ENCODE measurements at regions of chr22 and their contacts with region 1.

Region 1: DNA sequence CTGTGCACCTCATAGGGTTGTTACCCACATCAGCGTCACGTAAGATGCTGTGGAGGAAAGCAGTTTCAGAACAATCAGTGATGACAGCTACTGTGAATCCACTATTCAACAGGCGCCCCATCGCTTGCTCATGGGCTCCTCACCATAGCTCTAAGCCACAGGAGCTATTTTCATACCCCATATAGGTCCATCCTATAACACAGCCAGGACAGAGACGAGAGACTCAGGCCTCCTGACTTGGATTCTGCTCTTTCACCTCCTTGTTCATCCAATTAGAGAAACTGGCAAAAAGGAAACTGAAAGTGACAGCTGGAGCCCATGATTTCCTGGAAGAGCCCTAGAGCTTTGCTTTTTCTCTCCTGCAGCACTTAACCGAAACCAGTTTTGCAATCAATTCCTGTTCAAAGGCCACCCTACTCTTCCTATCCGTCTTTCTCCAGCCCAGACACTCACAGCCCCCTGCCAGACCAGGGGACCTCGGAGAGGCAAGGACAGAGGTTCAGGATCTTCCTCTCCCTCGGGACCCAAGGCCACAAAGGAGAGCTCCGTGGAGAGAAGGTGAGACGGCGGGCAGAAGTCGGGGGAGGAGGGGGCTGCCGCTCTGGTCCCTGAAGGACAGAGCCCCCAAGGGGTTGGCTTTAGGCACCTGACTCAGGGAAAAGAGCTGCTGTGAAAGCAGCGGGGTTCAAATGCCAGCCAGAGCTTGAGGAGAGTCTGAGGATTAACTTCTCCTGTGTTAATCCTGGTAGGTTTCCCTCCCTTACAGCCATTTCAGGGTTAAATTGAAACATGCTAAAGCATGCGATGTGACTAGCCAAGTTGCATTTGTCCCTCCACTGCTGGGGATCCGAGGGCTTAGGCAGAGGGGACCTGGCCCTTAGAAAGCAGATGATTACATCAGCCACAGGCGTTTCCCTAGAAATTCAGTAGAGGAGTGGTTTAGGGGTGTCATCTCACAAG is at the start of gene APOL6:
- DNase-seq: peak; percentile 66
- ATAC-seq: peak; percentile 78
- H3K4me3 Mint-ChIP-seq: peak within 1 kb of the TSS; percentile 100
- H3K27ac Mint-ChIP-seq: peak within 1 kb of the TSS; percentile 100
- H3K4me1 Mint-ChIP-seq: peaks cover 25% of the 10 kb centered on the region
- H3K27me3 Mint-ChIP-seq: no peaks in the 10 kb centered on the region
- total RNA-seq, gene APOL6: 66.9 to 68.0 TPM

Region 2: GRCh38 chr22:35275580-35275979 is 372.8 kb before region 1 on chr22:
- POLR2A ChIA-PET with region 1: no interaction called
- DNase-seq: no peak
- ATAC-seq: no peak
- H3K4me3 Mint-ChIP-seq: no peak overlapping the region
- H3K27ac Mint-ChIP-seq: no peak overlapping the region
- H3K4me1 Mint-ChIP-seq: peaks cover 21% of the 10 kb centered on the region
- H3K27me3 Mint-ChIP-seq: no peaks in the 10 kb centered on the region

Region 3: DNA sequence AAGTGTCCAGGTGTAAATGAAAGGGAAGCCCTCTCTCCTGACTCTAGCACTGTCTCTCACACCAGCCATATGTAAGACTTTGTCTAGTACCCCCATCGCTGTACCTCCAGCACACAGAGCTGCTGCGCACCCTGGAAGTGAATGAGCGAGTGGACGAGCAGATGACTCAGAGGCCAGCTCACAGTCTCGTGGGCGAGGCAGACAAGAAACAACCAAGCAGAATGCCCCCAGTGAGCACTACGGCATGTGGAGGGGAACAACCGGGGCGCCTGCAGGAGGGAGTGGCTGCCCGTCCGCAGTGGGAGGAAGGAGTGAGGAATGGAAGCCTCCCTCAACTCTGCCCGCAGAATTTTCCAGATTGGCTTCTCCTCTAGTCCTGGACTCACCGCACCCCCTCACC is 202.0 kb before region 1 on chr22:
- POLR2A ChIA-PET with region 1: no interaction called
- DNase-seq: no peak
- ATAC-seq: no peak
- H3K4me3 Mint-ChIP-seq: no peak overlapping the region
- H3K27ac Mint-ChIP-seq: no peak overlapping the region
- H3K4me1 Mint-ChIP-seq: peaks cover 6% of the 10 kb centered on the region
- H3K27me3 Mint-ChIP-seq: no peaks in the 10 kb centered on the region

Region 4: GRCh38 chr22:35627264-35628041 is 20.9 kb before region 1 on chr22:
- POLR2A ChIA-PET with region 1: interaction called, 14 read pairs
- DNase-seq: peak; percentile 65
- ATAC-seq: peak; percentile 51
- H3K4me3 Mint-ChIP-seq: peak overlapping the region; percentile 84
- H3K27ac Mint-ChIP-seq: peak overlapping the region; percentile 46
- H3K4me1 Mint-ChIP-seq: peaks cover 16% of the 10 kb centered on the region
- H3K27me3 Mint-ChIP-seq: peaks cover 8% of the 10 kb centered on the region

Region 5: DNA sequence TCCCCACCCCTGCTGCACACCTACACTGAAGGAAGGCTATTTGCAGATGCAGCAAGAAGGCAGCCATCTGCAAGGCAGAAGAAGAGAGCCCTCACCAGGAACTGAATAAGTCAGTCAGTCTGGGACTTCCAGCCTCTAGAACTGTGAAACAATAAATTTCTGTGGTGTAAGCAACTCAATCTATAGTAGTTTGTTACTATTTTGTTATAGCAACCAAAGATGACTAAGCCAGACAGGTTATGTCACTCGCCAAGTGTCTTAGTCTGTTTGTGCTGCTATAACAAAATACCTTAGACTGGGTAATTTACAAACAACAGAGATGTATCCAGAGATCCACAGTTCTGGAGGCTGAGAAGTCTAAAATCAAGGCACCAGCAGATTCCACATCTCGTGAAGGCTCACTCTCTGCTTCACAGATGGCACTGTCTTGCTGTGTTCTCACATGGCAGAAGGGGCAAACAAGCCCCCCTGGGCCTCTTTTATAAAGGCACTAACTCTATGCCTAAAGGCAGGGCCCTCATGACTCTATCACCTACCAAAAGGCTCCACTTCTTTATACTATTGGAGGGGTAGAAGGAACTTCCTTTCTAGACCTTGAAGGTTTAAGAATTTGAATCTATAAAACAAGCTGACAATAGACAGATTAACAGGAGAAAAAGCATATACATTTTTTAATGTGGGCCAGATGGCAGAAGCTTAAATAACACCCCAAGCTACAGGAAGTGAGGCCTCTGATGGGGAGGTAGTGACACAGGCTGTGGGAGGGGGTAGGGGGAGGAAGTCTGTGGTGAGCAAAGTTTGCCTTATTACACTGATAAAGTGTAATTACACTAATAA is 12.2 kb after region 1 on chr22:
- POLR2A ChIA-PET with region 1: interaction called, 61 read pairs
- DNase-seq: no peak
- ATAC-seq: peak; percentile 94
- H3K4me3 Mint-ChIP-seq: peak overlapping the region; percentile 62
- H3K27ac Mint-ChIP-seq: peak overlapping the region; percentile 87
- H3K4me1 Mint-ChIP-seq: peaks cover 42% of the 10 kb centered on the region
- H3K27me3 Mint-ChIP-seq: no peaks in the 10 kb centered on the region

Region 6: GRCh38 chr22:35769974-35770373 is 121.6 kb after region 1 on chr22:
- POLR2A ChIA-PET with region 1: no interaction called
- DNase-seq: no peak
- ATAC-seq: no peak
- H3K4me3 Mint-ChIP-seq: no peak overlapping the region
- H3K27ac Mint-ChIP-seq: no peak overlapping the region
- H3K4me1 Mint-ChIP-seq: no peaks in the 10 kb centered on the region
- H3K27me3 Mint-ChIP-seq: peaks cover 13% of the 10 kb centered on the region